CD4-positive, alpha-beta memory T cell (primary cell): ENCODE measurements at regions of chr1 and their contacts with region 1.

Region 1: DNA sequence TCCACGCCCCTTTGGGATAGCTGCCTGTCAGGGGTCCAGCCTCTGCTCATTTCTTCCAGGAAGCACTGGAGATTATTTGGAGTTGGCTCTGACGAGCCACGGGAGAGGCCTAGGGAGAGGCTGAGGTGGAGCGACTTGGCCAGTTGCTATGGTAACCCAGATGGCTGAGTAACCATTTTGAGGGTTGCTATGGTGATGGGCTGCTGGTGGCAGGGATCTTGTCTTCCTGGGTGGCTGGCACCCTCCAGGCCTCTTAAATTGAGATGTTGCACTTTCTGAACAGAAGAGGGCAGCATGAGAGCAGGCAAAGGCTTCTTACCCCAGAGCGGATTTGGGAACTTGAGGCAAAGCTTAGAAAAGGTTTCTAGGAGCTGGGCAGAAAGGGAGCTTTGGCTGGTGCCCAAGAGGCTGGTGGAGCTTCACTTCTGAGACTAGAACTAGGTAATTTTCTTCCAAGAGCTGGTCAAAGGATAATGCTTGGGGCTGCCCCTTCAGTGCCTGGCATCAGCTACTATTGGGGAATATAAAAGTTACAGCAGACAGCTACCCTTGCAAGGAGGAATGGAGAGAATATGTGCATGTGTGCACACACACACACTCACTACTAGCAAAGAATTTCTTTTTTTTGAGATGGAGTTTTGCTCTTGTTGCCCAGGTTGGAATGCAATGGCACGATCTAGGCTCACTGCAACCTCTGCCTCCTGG is 72.5 kb downstream of the NDUFS5 start:
- DNase-seq: peak; percentile 69 to 83 (median 77)
- H3K4me3 ChIP-seq: no peak overlapping the region
- H3K4me3 Mint-ChIP-seq: peak overlapping the region in 2 of 8 donors; percentile 2 to 20
- H3K27ac ChIP-seq: no peak overlapping the region
- H3K27ac Mint-ChIP-seq: peak overlapping the region in 6 of 7 donors; percentile 3 to 90 (median 74)
- H3K4me1 ChIP-seq: peaks cover 14% of the 10 kb centered on the region
- H3K4me1 Mint-ChIP-seq: peaks cover 11 to 29% (median 15%) of the 10 kb centered on the region in 4 donors
- H3K27me3 ChIP-seq: no peaks in the 10 kb centered on the region
- H3K27me3 Mint-ChIP-seq: no peaks in the 10 kb centered on the region

Region 2: DNA sequence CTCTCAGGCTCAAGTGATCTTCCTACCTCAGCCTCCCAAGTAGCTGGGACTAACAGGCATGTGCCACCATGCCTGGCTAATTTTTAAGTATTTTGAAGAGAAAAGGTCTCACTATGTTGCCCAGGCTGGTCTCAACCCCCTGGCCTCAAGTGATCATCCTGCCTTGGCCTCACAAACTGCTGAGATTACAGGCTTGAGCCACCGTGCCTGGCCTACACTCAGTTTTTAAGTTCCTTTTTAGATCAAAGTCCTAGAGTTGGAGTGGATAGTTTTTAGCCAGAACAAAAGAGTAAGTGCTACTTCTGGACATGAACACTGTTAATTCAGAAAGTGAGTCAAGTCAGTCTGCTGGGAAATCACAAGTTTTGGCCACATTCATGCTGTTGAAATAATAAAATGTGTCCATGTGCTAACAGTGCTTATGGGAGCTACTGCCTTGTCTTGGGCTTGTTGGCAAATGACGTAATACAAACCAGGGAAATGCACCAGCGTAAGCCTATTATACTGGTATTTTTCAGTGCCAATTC is 11.7 kb after region 1 on chr1:
- CTCF ChIA-PET with region 1: interaction called, 19 read pairs
- POLR2A ChIA-PET with region 1: no interaction called
- intact Hi-C with region 1: no loop called
- DNase-seq: no peak
- H3K4me3 ChIP-seq: no peak overlapping the region
- H3K4me3 Mint-ChIP-seq: no peak overlapping the region
- H3K27ac ChIP-seq: no peak overlapping the region
- H3K27ac Mint-ChIP-seq: no peak overlapping the region
- H3K4me1 ChIP-seq: peaks cover 12% of the 10 kb centered on the region
- H3K4me1 Mint-ChIP-seq: peaks cover 5 to 10% (median 9%) of the 10 kb centered on the region in 4 donors
- H3K27me3 ChIP-seq: no peaks in the 10 kb centered on the region
- H3K27me3 Mint-ChIP-seq: no peaks in the 10 kb centered on the region

Region 3: DNA sequence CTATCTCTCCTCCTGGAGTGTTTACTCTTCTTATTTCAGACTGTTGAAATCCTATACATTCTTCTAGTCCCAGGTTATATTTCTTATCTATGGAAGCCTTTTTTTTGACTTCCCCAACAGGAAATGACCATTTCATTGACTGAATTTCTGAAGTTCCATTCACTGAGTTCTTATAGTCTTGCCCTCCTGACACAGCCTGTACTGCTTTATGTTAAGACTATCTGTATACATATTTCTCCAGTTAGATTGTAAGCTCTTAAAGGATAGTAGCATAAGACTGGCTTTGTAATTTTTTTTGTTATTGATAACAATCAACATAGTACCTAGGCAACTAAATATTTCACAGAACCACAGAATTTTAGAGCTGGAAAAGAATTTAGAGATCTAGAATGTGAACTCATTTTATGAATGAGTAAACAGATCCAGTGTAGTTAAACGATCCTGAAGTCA is 90.9 kb after region 1 on chr1:
- CTCF ChIA-PET with region 1: interaction called, 94 read pairs
- POLR2A ChIA-PET with region 1: interaction called, 7 read pairs
- intact Hi-C with region 1: loop called (anchors 1 kb)
- DNase-seq: no peak
- H3K4me3 ChIP-seq: no peak overlapping the region
- H3K4me3 Mint-ChIP-seq: peak overlapping the region in 1 of 8 donors; percentile 61
- H3K27ac ChIP-seq: no peak overlapping the region
- H3K27ac Mint-ChIP-seq: peak overlapping the region in 6 of 7 donors; percentile 5 to 94 (median 78)
- H3K4me1 ChIP-seq: peaks cover 60% of the 10 kb centered on the region
- H3K4me1 Mint-ChIP-seq: peaks cover 35 to 76% (median 48%) of the 10 kb centered on the region in 4 donors
- H3K27me3 ChIP-seq: no peaks in the 10 kb centered on the region
- H3K27me3 Mint-ChIP-seq: no peaks in the 10 kb centered on the region

Region 4: GRCh38 chr1:39378377-39378776 is 279.7 kb after region 1 on chr1:
- CTCF ChIA-PET with region 1: interaction called, 10 read pairs
- POLR2A ChIA-PET with region 1: no interaction called
- intact Hi-C with region 1: loop called (anchors 2 kb)
- DNase-seq: peak in 1 of 5 donors; percentile 6
- H3K4me3 ChIP-seq: no peak overlapping the region
- H3K4me3 Mint-ChIP-seq: no peak overlapping the region
- H3K27ac ChIP-seq: no peak overlapping the region
- H3K27ac Mint-ChIP-seq: peak overlapping the region in 5 of 7 donors; percentile 2 to 91 (median 76)
- H3K4me1 ChIP-seq: no peaks in the 10 kb centered on the region
- H3K4me1 Mint-ChIP-seq: peaks cover 0 to 4% (median 3%) of the 10 kb centered on the region in 4 donors
- H3K27me3 ChIP-seq: no peaks in the 10 kb centered on the region
- H3K27me3 Mint-ChIP-seq: no peaks in the 10 kb centered on the region

Region 5: GRCh38 chr1:39538588-39539465 is 440.1 kb after region 1 on chr1:
- CTCF ChIA-PET with region 1: interaction called, 20 read pairs
- POLR2A ChIA-PET with region 1: interaction called, 5 read pairs
- intact Hi-C with region 1: loop called (anchors 1 kb)
- DNase-seq: peak; percentile 38 to 49 (median 46)
- H3K4me3 ChIP-seq: no peak overlapping the region
- H3K4me3 Mint-ChIP-seq: no peak overlapping the region
- H3K27ac ChIP-seq: no peak overlapping the region
- H3K27ac Mint-ChIP-seq: peak overlapping the region in 1 of 7 donors; percentile 42
- H3K4me1 ChIP-seq: no peaks in the 10 kb centered on the region
- H3K4me1 Mint-ChIP-seq: peaks cover 0 to 5% (median 2%) of the 10 kb centered on the region in 4 donors
- H3K27me3 ChIP-seq: no peaks in the 10 kb centered on the region
- H3K27me3 Mint-ChIP-seq: no peaks in the 10 kb centered on the region

Region 6: GRCh38 chr1:39720094-39720999 is 621.6 kb after region 1 on chr1:
- CTCF ChIA-PET with region 1: no interaction called
- POLR2A ChIA-PET with region 1: no interaction called
- intact Hi-C with region 1: loop called (anchors 10 kb)
- DNase-seq: peak in 4 of 5 donors; percentile 65 to 76 (median 72)
- H3K4me3 ChIP-seq: no peak overlapping the region
- H3K4me3 Mint-ChIP-seq: no peak overlapping the region
- H3K27ac ChIP-seq: no peak overlapping the region
- H3K27ac Mint-ChIP-seq: no peak overlapping the region
- H3K4me1 ChIP-seq: no peaks in the 10 kb centered on the region
- H3K4me1 Mint-ChIP-seq: peaks cover 0 to 3% (median under 1%) of the 10 kb centered on the region in 4 donors
- H3K27me3 ChIP-seq: peaks cover 5% of the 10 kb centered on the region
- H3K27me3 Mint-ChIP-seq: peaks cover 27 to 30% of the 10 kb centered on the region in 2 donors